ENCODE measurements at regions of chr7 and their contacts with region 1.

Region 1: GRCh38 chr7:55271069-55271626 is 94.0 kb upstream of the LANCL2 start:
- DNase-seq: peak in 1 of 2 experiments; percentile 38
- H3K4me3 ChIP-seq: no peak overlapping the region
- H3K27ac ChIP-seq: no peak overlapping the region
- H3K4me1 ChIP-seq: no peaks in the 10 kb centered on the region; the same call in 1 of the 2 replicates
- H3K27me3 ChIP-seq: peaks cover 55% of the 10 kb centered on the region
- CTCF ChIP-seq: peak; percentile 77

Region 2: GRCh38 chr7:54773472-54774399 is 497.4 kb before region 1 on chr7:
- CTCF ChIA-PET with region 1: interaction called, 5 read pairs
- POLR2A ChIA-PET with region 1: no interaction called
- intact Hi-C with region 1: loop called (anchors 1 kb)
- DNase-seq: peak; percentile 94
- H3K4me3 ChIP-seq: peak overlapping the region; percentile 58
- H3K27ac ChIP-seq: peak overlapping the region; percentile 67
- H3K4me1 ChIP-seq: peaks cover 20% of the 10 kb centered on the region
- H3K27me3 ChIP-seq: no peaks in the 10 kb centered on the region
- CTCF ChIP-seq: peak; percentile 100

Region 3: GRCh38 chr7:55198634-55199392 is 72.3 kb before region 1 on chr7:
- CTCF ChIA-PET with region 1: no interaction called
- POLR2A ChIA-PET with region 1: no interaction called
- intact Hi-C with region 1: no loop called
- DNase-seq: no peak
- H3K4me3 ChIP-seq: no peak overlapping the region
- H3K27ac ChIP-seq: no peak overlapping the region
- H3K4me1 ChIP-seq: no peaks in the 10 kb centered on the region
- H3K27me3 ChIP-seq: no peaks in the 10 kb centered on the region
- CTCF ChIP-seq: no peak

Region 4: DNA sequence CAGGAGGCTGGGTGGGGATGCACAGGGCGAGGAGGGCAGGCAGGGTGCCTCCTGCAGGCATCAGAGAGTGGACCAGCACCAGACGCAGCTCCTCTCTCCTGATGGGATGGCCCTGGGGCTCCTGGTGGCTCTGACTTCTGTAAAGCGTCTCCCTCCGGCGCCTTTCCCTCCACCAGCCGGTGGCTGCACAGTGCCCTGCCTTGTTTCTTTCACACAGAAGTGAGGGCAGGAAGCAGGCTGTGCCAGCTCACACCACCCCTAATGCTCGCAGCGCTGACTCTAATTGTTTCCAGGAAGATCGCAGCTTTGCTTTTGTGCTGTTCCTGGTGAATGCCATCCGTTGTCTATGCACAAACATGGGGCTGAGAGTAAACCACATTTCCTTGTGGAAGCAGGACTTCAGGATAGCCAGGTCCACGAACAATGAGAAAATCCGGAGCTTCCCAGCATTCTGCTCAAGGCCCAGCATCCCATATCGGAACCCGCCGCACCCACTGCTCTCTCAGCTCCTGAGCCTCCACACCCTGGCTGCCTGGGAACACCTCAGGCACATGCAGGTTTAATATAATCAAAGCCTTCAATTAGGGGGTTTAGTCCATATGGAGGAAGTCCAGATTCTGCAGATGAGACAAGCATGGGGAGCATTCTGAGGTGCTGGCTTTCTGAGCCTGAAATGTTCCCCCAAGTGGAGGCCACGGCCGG is 58.2 kb before region 1 on chr7:
- CTCF ChIA-PET with region 1: no interaction called
- POLR2A ChIA-PET with region 1: no interaction called
- intact Hi-C with region 1: no loop called
- DNase-seq: no peak
- H3K4me3 ChIP-seq: no peak overlapping the region
- H3K27ac ChIP-seq: no peak overlapping the region
- H3K4me1 ChIP-seq: peaks cover 14% of the 10 kb centered on the region
- H3K27me3 ChIP-seq: no peaks in the 10 kb centered on the region
- CTCF ChIP-seq: no peak

Region 5: GRCh38 chr7:55723621-55723941 is 452.4 kb after region 1 on chr7:
- CTCF ChIA-PET with region 1: no interaction called
- POLR2A ChIA-PET with region 1: no interaction called
- intact Hi-C with region 1: loop called (anchors 10 kb)
- DNase-seq: no peak
- H3K4me3 ChIP-seq: no peak overlapping the region
- H3K27ac ChIP-seq: no peak overlapping the region
- H3K4me1 ChIP-seq: 0 out of 2 replicates have a peak, but pooled peaks cover 3% of the 10 kb centered on the region
- H3K27me3 ChIP-seq: no peaks in the 10 kb centered on the region
- CTCF ChIP-seq: no peak